ENCODE measurements at regions of chr11 and their contacts with region 1.

Region 1: DNA sequence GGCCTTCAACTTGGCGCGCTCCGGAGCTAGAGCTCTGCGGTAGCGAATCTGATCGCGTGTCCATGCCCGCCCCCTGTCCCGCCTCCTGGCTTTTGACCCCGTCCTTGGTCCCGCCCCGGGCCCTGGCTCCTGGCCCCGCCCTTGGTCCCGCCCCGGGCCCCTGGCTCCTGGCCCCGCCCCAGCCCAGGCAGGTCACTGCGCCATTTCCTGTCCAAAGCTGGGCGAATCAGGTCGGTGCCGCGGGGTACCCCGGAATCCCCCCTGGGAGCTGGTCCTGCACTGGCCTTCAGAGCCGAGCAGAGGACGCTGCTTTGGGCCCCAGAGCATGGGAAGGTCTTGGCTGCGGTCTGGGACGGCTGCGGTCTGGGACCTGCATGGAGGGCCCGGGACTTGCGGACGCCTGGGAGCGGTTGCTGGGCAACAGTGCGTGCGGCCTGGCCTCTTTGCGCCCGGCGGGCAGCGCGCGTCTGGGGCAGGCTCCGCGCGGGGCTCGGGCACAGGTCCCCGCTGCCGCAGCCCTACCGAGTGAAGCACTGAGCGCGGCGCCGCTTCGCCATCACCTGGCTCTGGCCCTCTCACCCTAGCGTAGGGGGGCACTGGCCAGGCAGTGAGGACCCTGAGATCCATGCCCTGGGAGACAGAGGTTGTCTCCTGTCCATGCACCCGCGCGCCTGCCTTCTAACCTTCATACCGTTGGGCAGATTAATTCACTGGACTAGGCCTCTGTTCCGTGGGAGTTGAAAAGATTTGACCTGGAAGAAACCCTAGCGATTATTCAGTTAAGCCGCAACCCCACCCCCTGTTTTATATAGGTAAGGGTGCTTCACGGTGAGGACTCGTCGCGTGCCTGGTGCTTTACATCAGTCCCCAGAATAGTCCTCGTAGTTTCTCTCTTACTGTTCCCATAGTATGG is at the start of gene TTC12:
- DNase-seq: peak; percentile 97
- H3K4me3 ChIP-seq: peak within 1 kb of the TSS; percentile 30 to 82 (median 70)
- H3K27ac ChIP-seq: peak within 1 kb of the TSS; percentile 86 to 94 (median 92)
- H3K4me1 ChIP-seq: peaks cover 0 to 16% (median 6%) of the 10 kb centered on the region in 4 donors
- H3K27me3 ChIP-seq: no peaks in the 10 kb centered on the region
- CTCF ChIP-seq: no peak
- EP300 ChIP-seq: no peak
- POLR2A ChIP-seq: peak; percentile 41
- total RNA-seq, gene TTC12: 10.3 to 24.1 (median 16.0) TPM

Region 2: DNA sequence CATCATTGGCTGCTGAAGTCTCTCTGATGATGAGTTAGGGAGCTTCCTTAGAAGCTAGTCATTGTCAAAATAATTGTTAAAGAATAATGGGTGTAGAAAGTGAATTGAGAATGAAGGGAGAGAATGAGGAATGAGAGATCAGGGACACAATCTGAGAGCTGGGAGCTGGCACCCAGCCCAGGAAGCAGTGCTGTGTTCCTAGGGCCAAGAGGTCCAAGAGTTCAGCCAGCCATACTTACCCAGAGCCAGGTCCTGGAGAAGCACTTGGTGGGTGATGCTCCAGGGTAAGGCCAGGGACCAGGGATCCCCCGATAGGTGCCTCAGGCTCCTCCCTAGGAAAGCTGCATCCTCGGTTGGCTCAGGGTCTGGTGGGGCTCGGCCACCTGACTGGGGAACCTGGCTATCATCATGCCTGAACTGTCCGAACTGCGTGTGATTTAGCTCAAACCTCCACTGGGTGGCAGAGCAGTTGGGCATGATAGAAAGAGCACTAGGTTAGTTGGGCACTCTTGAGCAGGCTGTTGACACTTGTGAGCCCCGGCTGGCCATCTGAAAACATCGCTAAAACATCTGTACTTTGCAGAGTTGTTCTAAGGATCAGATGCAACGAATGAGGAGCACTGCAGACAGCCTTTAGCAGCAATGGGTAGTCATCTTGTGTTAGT is 477.4 kb before region 1 on chr11:
- in situ Hi-C with region 1: no loop called
- intact Hi-C with region 1: no loop called
- DNase-seq: no peak
- H3K4me3 ChIP-seq: no peak overlapping the region
- H3K27ac ChIP-seq: no peak overlapping the region
- H3K4me1 ChIP-seq: no peaks in the 10 kb centered on the region
- H3K27me3 ChIP-seq: no peaks in the 10 kb centered on the region
- CTCF ChIP-seq: no peak
- EP300 ChIP-seq: no peak
- POLR2A ChIP-seq: no peak

Region 3: GRCh38 chr11:113249491-113249763 is 65.2 kb before region 1 on chr11:
- in situ Hi-C with region 1: no loop called
- intact Hi-C with region 1: no loop called
- DNase-seq: no peak
- H3K4me3 ChIP-seq: no peak overlapping the region
- H3K27ac ChIP-seq: no peak overlapping the region
- H3K4me1 ChIP-seq: no peaks in the 10 kb centered on the region
- H3K27me3 ChIP-seq: no peaks in the 10 kb centered on the region
- CTCF ChIP-seq: no peak
- EP300 ChIP-seq: no peak
- POLR2A ChIP-seq: no peak

Region 4: DNA sequence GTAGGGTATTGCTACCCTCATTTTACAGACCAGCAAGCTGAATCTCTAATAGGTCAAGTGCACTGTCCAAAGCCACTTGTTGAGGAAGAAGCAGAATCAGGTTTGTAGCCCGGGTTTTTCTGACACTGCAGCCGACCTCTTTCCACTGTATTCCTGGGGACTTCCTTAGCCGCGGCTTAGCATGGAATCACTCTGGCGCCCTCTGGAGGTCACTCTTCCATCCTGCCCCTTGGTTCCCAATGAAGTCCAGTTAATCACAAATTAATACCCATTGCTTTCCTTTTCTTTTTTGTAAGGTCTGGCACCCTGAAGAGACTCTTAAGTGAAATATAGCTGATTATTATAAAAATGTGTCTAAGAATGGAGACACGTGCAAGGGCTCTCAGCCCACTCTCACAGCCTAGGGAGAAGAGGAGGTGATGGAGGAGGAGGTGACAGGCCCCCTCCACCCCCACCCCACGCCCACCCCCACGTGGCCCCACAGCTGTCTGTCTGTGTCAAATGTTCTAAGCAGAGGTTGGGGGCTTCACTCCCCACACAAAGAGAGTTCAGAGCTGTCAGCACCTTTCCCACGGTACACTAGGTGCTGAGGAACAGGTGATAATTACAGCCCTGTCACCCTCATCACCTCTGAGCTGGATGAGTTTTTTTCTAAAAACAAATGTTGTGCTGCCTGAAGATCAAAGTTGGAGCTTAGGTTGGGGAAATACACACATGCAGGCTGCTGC is 218.2 kb after region 1 on chr11:
- in situ Hi-C with region 1: loop called (anchors 5 to 10 kb)
- intact Hi-C with region 1: loop called (anchors 5 kb)
- DNase-seq: peak; percentile 77
- H3K4me3 ChIP-seq: no peak overlapping the region
- H3K27ac ChIP-seq: no peak overlapping the region
- H3K4me1 ChIP-seq: peaks cover 0 to 6% (median 0%) of the 10 kb centered on the region in 4 donors
- H3K27me3 ChIP-seq: no peaks in the 10 kb centered on the region
- CTCF ChIP-seq: peak; percentile 65 to 86 (median 81)
- EP300 ChIP-seq: no peak
- POLR2A ChIP-seq: no peak

Region 5: GRCh38 chr11:113773416-113774173 is 458.9 kb after region 1 on chr11 and contains the start of gene ZW10:
- in situ Hi-C with region 1: no loop called
- intact Hi-C with region 1: no loop called
- DNase-seq: peak; percentile 98
- H3K4me3 ChIP-seq: peak within 1 kb of the TSS; percentile 60 to 92 (median 84)
- H3K27ac ChIP-seq: peak within 1 kb of the TSS; percentile 83 to 91 (median 86)
- H3K4me1 ChIP-seq: peaks cover 6 to 12% (median 9%) of the 10 kb centered on the region in 4 donors
- H3K27me3 ChIP-seq: no peaks in the 10 kb centered on the region
- CTCF ChIP-seq: peak; percentile 80 to 88 (median 87)
- EP300 ChIP-seq: no peak
- POLR2A ChIP-seq: peak; percentile 51
- total RNA-seq, gene ZW10: 5.6 to 11.9 (median 8.6) TPM

Measured in transverse colon (tissue), 4 donors.